AG04450 (cell line): ENCODE measurements at regions of chr1 and their contacts with region 1.

Region 1: GRCh38 chr1:185670187-185670627 is 64.0 kb upstream of the HMCN1 start:
- DNase-seq: peak; percentile 21
- H3K4me3 ChIP-seq: no peak overlapping the region
- H3K27ac ChIP-seq: no peak overlapping the region
- H3K27me3 ChIP-seq: no peaks in the 10 kb centered on the region
- CTCF ChIP-seq: peak; percentile 78

Region 2: GRCh38 chr1:185156854-185157598 is 513.2 kb before region 1 on chr1 and contains the starts of genes SWT1 and TRMT1L:
- CTCF ChIA-PET with region 1: interaction called, 14 read pairs
- POLR2A ChIA-PET with region 1: no interaction called
- DNase-seq: peak; percentile 97
- H3K4me3 ChIP-seq: peak within 1 kb of the TSS; percentile 84
- H3K27ac ChIP-seq: peak within 1 kb of the TSS; percentile 97
- H3K27me3 ChIP-seq: no peaks in the 10 kb centered on the region
- CTCF ChIP-seq: no peak
- polyA plus RNA-seq, gene SWT1: 2.9 and 3.6 TPM in 2 replicates
- polyA plus RNA-seq, gene TRMT1L: 26.1 and 33.4 TPM in 2 replicates

Region 3: GRCh38 chr1:185238447-185238846 is 431.8 kb before region 1 on chr1:
- CTCF ChIA-PET with region 1: interaction called, 45 read pairs
- POLR2A ChIA-PET with region 1: interaction called, 3 read pairs
- DNase-seq: no peak
- H3K4me3 ChIP-seq: no peak overlapping the region
- H3K27ac ChIP-seq: no peak overlapping the region
- H3K27me3 ChIP-seq: no peaks in the 10 kb centered on the region
- CTCF ChIP-seq: peak; percentile 56

Region 4: DNA sequence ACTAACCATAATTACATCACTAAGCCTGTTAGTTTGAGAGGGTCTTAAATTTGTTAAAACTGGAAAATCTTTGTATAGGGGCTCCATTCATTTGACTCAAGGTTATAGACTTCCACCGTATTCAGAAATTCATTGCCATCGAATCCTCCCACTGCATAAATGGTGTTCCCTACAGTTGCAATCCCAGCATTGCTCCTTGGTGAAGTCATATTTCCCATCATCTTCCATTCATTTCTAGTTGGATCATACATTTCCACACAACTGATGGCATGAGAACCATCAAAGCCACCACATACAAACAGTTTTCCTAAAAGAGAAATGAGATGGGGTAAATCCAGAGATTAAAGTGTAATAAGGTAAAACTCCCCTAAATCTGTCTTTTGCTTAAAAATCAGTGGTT is 372.2 kb before region 1 on chr1:
- CTCF ChIA-PET with region 1: interaction called, 14 read pairs
- POLR2A ChIA-PET with region 1: no interaction called
- DNase-seq: no peak
- H3K4me3 ChIP-seq: no peak overlapping the region
- H3K27ac ChIP-seq: no peak overlapping the region
- H3K27me3 ChIP-seq: no peaks in the 10 kb centered on the region
- CTCF ChIP-seq: no peak

Region 5: DNA sequence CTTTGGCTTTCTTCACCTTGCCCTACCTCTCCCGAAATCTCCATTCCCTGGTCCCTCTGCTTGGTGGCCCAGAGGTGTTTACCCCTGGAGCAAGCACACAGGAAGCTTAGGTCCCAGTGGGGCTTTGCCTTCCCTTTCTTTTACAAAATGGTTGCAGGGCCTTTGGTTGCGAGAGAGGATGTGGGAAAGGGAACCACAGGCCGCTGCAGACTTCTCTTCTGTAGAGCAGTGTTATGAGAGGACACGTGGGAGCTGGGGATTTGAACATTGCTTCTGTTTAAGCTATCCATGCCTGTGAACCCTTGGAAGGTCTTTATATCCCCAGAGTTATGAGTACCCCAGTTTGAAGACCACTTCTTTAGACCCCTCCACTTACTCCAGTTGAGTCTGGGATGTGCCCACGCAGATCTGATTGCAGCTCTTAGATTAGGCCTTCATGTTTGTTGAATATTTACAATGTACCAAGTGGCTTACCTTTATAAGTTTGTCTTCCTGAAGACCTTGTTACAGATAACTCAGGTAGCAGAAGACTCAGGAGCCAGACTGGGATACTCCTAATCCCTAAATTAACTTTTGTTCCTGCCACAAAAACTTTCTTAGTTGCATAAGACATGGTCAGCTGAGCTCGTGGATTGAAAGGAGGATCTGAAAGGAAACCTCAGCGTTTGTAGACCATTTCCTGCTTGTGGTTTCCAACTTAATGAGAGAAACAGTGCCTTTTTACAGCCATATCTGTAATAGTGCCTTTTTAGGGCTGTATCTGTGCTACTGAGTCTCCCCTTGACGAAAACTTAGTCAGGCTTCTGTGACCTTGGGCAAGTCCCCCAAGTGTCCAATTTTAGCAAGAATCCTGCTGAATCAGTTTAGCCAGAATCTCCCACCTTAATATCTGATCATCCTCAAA is 331.2 kb before region 1 on chr1:
- CTCF ChIA-PET with region 1: interaction called, 13 read pairs
- POLR2A ChIA-PET with region 1: no interaction called
- DNase-seq: no peak
- H3K4me3 ChIP-seq: no peak overlapping the region
- H3K27ac ChIP-seq: no peak overlapping the region
- H3K27me3 ChIP-seq: no peaks in the 10 kb centered on the region
- CTCF ChIP-seq: no peak

Region 6: DNA sequence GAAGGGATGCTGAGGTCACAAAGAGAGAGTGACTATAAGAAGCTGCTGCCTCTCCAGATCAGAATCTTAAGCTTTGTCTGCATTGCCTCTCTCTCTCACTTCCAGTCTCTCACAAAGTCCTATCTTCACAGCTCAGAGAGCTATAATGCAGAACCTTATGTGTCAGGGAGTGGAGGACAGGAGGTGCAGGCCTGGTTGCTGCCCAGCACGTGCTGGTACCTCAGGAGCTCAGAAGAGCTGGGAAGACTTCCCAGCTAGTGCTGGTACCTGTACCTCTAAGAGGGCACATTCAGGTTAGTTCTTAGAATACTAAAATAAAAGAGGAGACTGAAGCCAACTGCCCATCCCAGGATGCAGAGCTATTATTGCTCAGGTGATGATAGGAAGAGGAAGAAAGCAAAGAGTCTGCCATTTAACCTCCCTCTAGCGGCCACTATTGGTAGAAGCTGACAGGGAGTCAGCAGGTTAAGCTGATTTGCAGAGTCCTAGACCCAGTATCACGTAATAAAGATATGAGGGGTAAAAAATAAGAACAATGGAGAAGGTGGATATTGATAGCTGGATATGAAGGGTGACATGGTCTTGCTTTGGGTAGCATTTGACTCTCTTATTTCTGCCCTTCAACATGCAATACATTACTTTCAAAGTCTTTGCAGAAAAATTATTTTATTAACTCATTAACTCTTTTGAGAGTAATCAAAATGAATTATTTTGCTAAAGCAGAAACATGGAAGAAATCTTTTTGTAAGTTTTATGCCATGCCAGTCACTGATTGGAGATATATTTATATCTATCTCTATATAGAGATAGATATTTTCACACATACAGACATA is 74.2 kb before region 1 on chr1:
- CTCF ChIA-PET with region 1: interaction called, 25 read pairs
- POLR2A ChIA-PET with region 1: no interaction called
- DNase-seq: peak; percentile 6
- H3K4me3 ChIP-seq: no peak overlapping the region
- H3K27ac ChIP-seq: no peak overlapping the region
- H3K27me3 ChIP-seq: no peaks in the 10 kb centered on the region
- CTCF ChIP-seq: peak; percentile 83

Region 7: GRCh38 chr1:185681034-185681633 is 10.9 kb after region 1 on chr1:
- CTCF ChIA-PET with region 1: interaction called, 34 read pairs
- POLR2A ChIA-PET with region 1: no interaction called
- DNase-seq: no peak
- H3K4me3 ChIP-seq: no peak overlapping the region
- H3K27ac ChIP-seq: no peak overlapping the region
- H3K27me3 ChIP-seq: no peaks in the 10 kb centered on the region
- CTCF ChIP-seq: peak; percentile 62

Region 8: DNA sequence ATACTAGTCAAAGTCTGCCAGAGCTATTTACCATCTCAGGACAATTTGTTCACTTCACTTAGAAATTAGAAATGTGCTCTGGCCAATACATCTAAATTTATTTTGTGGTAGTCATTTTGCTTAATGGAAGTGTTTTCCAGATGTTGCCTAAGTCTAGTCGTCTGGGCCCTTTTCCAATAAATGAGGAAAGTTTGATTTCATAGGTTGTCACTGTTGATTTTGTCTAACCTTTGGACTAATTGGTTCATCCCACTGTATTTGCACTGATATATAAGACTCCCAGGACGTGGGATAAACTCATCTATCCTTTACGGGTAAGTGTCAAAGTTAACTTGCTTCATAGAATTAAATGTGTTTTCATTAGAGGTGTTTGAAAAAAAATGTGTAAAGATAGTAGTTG is 625.8 kb after region 1 on chr1:
- CTCF ChIA-PET with region 1: no interaction called
- POLR2A ChIA-PET with region 1: no interaction called
- DNase-seq: no peak
- H3K4me3 ChIP-seq: no peak within 1 kb of the TSS
- H3K27ac ChIP-seq: no peak within 1 kb of the TSS
- H3K27me3 ChIP-seq: no peaks in the 10 kb centered on the region
- CTCF ChIP-seq: no peak